ENCODE measurements at regions of chr20 and their contacts with region 1.

Region 1: GRCh38 chr20:47252879-47253307 is 103.6 kb downstream of the ZMYND8 start:
- DNase-seq: no peak
- H3K4me3 ChIP-seq: no peak overlapping the region
- H3K27ac ChIP-seq: no peak overlapping the region
- H3K4me1 ChIP-seq: no peaks in the 10 kb centered on the region
- H3K27me3 ChIP-seq: no peaks in the 10 kb centered on the region
- CTCF ChIP-seq: no peak
- POLR2A ChIP-seq: no peak

Region 2: GRCh38 chr20:47196091-47197081 is 56.5 kb before region 1 on chr20:
- intact Hi-C with region 1: loop called (anchors 2 kb)
- DNase-seq: no peak
- H3K4me3 ChIP-seq: no peak overlapping the region
- H3K27ac ChIP-seq: no peak overlapping the region
- H3K4me1 ChIP-seq: no peaks in the 10 kb centered on the region
- H3K27me3 ChIP-seq: no peaks in the 10 kb centered on the region
- CTCF ChIP-seq: peak; percentile 77 to 89 (median 89)
- POLR2A ChIP-seq: no peak

Region 3: DNA sequence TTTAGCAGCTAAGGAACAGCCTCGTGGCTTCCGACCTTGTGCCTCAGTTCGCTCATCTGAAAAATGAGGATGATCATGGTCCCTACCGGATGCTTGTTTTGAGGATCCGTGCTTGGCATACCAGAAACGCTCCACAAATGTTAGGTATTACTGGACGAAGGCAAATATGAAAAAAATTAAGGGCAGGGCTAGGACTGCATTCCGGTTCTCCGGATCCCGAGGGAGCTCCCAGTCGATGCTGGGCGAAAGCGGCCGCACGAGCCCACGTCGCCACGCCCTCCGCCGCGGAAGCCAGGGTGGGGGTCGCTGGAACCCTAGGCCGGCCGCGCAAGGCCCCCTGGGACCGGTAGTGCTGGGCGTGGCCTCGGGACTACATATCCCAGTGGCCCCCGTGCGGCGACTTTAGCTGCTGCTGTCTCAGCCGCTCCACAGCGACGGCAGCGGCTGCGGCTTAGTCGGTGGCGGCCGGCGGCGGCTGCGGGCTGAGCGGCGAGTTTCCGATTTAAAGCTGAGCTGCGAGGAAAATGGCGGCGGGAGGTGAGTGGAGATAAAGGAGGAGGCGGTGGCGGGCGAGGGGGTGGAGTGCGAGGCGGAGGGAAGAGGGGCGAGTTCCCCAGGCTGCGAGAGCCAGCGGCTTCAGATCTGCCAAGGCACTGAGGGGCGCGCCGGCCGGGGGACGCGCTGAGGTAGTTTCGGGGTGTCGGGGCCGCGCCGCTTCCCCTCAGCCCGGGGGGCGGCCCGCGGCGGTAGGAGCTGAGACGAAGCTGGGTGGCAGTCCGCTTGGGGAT is 248.8 kb after region 1 on chr20 and contains the start of gene NCOA3:
- intact Hi-C with region 1: no loop called
- DNase-seq: no peak
- H3K4me3 ChIP-seq: peak within 1 kb of the TSS; percentile 73 to 98
- H3K27ac ChIP-seq: peak within 1 kb of the TSS; percentile 97
- H3K4me1 ChIP-seq: peaks cover 30% of the 10 kb centered on the region
- H3K27me3 ChIP-seq: no peaks in the 10 kb centered on the region
- CTCF ChIP-seq: peak in 2 of 3 experiments; percentile 2 to 73
- POLR2A ChIP-seq: peak in 1 of 2 donors; percentile 95
- total RNA-seq, gene NCOA3: 47.1 TPM

Measured in vagina (tissue), 2 donors.